ENCODE measurements at regions of chr2 and their contacts with region 1.

Region 1: GRCh38 chr2:30287857-30288513 is 56.7 kb downstream of the LBH start:
- DNase-seq: peak; percentile 55
- ATAC-seq: peak; percentile 89
- H3K4me3 ChIP-seq: peak overlapping the region; percentile 40; the same call in 1 of the 2 replicates
- H3K27ac ChIP-seq: peak overlapping the region; percentile 85
- H3K4me1 ChIP-seq: peaks cover 26% of the 10 kb centered on the region
- H3K27me3 ChIP-seq: no peaks in the 10 kb centered on the region
- CTCF ChIP-seq: no peak
- EP300 ChIP-seq: peak; percentile 21 to 43; a peak in 1 of 4 replicates
- POLR2A ChIP-seq: no peak
- RAD21 ChIP-seq: no peak

Region 2: DNA sequence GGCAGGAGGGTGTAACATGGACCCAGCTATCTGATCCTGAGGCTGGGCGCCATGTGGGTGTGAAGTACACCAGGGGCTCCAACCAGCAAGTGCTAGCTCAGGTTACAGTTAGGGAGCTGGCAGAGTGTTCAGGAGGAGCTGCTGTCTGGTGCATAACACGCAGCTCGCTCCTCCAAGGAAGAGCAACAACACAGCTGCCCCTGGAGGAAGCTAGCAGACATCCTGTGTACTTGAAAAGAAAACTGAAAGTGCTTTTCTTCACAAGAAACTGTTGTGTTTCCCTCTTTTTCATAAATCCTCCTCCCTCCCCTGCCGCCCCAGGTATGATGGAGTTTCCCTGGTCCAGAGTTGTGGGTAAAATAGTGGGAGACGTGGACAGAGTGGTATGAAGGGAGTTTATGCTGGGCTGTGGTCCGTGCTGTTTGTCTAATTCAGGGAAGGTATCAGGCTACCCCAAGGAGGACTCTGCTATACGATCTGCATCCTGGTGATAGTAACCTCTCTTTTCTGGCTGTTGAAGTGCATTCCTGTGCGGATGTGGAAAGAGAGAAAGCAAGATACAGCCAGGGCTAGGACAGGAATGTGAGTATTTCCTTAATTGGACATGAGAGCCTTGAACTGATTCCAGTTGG is 62.7 kb before region 1 on chr2:
- CTCF ChIA-PET with region 1: interaction called, 13 read pairs
- POLR2A ChIA-PET with region 1: interaction called, 9 read pairs
- RAD21 ChIA-PET with region 1: interaction called, 37 read pairs
- SMC1A ChIA-PET with region 1: interaction called, 46 read pairs
- in situ Hi-C with region 1: no loop called
- intact Hi-C with region 1: no loop called
- DNase-seq: no peak
- ATAC-seq: peak; percentile 72
- H3K4me3 ChIP-seq: peak overlapping the region; percentile 56
- H3K27ac ChIP-seq: peak overlapping the region; percentile 95
- H3K4me1 ChIP-seq: peaks cover 45% of the 10 kb centered on the region
- H3K27me3 ChIP-seq: no peaks in the 10 kb centered on the region
- CTCF ChIP-seq: 0 out of 6 replicates have a peak, but pooled peaks of 1 of the 3 experiments have one; percentile 7
- EP300 ChIP-seq: no peak
- POLR2A ChIP-seq: peak; percentile 60
- RAD21 ChIP-seq: no peak

Region 3: DNA sequence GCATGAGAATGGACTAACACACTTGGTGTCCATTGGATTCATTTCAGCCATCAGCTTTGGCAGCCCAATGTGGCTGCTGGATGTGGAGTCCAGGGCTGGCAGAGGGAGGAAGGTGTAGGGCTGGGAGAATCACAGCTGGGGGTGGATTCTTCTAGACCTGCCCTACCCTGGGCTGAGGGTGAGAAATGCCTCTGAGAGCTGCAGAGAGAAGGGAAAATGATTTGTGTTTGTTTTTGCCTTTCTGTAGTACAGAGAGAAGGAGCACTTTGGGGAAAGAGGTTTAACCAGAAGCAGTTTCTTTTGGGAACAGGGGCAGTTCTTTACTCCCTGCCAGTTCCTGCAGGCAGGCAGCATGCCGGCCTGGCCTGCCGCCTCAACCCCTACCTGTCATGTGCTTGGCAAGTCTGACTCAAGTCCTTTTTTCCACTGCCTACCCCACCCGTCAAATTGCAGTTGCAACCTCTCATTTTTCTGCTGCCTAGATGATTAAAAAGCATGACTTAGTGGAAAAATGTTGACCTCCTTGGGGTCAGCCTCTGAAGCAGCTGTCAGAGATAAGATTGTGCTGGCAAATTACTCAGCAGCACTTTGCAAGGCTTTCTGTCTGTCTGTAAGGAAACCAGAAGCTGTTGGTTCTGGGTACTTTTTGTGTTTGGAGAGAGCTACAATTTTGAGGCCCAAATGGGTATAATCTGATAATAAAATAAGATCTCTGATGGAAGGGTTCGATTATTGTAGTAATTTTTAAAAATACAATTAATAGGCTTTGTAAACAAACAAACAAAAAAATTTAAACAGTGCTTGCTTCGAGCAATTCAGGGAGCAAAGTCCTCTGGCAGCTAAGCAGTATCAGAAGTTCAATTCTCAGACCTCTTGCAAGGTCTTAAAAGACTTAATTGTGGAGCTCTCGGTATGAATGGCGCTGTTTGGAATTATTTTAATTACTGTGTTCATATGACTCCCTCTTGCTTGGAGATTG is 35.0 kb before region 1 on chr2:
- CTCF ChIA-PET with region 1: interaction called, 3 read pairs
- POLR2A ChIA-PET with region 1: no interaction called
- RAD21 ChIA-PET with region 1: interaction called, 11 read pairs
- SMC1A ChIA-PET with region 1: interaction called, 24 read pairs
- in situ Hi-C with region 1: no loop called
- intact Hi-C with region 1: no loop called
- DNase-seq: no peak
- ATAC-seq: peak; percentile 64
- H3K4me3 ChIP-seq: no peak overlapping the region
- H3K27ac ChIP-seq: no peak overlapping the region
- H3K4me1 ChIP-seq: no peaks in the 10 kb centered on the region; the same call in 1 of the 2 replicates
- H3K27me3 ChIP-seq: no peaks in the 10 kb centered on the region
- CTCF ChIP-seq: no peak
- EP300 ChIP-seq: no peak
- POLR2A ChIP-seq: no peak
- RAD21 ChIP-seq: no peak

Region 4: GRCh38 chr2:30273261-30273861 is 14.6 kb before region 1 on chr2:
- CTCF ChIA-PET with region 1: interaction called, 9 read pairs
- POLR2A ChIA-PET with region 1: interaction called, 19 read pairs
- RAD21 ChIA-PET with region 1: interaction called, 50 read pairs
- SMC1A ChIA-PET with region 1: interaction called, 24 read pairs
- in situ Hi-C with region 1: no loop called
- intact Hi-C with region 1: no loop called
- DNase-seq: no peak
- ATAC-seq: no peak
- H3K4me3 ChIP-seq: no peak overlapping the region
- H3K27ac ChIP-seq: no peak overlapping the region
- H3K4me1 ChIP-seq: no peaks in the 10 kb centered on the region; the same call in 1 of the 2 replicates
- H3K27me3 ChIP-seq: no peaks in the 10 kb centered on the region
- CTCF ChIP-seq: no peak
- EP300 ChIP-seq: no peak
- POLR2A ChIP-seq: no peak
- RAD21 ChIP-seq: no peak

Region 5: DNA sequence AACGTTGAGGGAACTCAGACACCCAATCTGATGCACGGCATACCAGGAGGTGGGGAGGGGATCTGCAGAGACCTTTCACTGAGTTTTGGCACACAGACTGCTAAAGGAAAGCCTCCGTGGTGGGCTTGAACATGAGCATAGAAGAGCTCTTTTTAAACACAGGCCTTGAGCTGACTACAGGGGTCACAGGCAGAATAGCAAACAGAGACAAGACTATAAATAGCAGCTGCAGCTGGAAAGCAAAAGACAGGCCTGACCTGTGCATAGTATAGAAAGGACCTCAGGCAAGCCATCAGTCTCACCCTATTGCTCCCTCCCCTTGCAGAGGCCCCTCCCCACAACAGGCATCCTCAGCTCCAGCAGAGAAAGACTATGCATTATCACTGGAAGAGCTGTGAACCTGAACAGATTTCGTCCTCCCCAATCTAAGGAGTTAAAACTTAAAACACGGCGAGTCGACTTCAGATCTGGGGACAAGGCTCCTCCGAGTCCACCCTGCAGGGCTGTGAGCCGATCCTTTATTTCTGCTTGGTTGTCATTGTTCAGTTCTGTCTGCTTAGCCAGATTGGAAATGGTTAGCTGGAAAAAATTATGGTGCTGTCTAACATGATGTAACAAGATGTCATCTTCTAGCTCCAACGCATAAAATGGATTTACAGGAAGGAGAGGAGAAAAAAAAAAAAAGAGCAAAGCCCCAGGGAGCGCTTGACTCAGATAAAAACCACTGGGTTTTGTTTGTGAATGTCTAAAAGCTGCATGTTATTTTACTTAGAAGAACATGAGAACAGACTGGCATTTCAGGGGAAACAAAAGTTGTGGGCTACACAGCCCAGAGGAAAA is 133.8 kb after region 1 on chr2:
- CTCF ChIA-PET with region 1: interaction called, 3 read pairs
- POLR2A ChIA-PET with region 1: interaction called, 3 read pairs
- RAD21 ChIA-PET with region 1: interaction called, 21 read pairs
- SMC1A ChIA-PET with region 1: interaction called, 7 read pairs
- in situ Hi-C with region 1: no loop called
- intact Hi-C with region 1: no loop called
- DNase-seq: peak; percentile 28
- ATAC-seq: peak; percentile 77
- H3K4me3 ChIP-seq: 0 out of 2 replicates have a peak overlapping the region, but pooled peaks have one; percentile 17
- H3K27ac ChIP-seq: peak overlapping the region; percentile 6; the same call in 1 of the 2 replicates
- H3K4me1 ChIP-seq: peaks cover 25% of the 10 kb centered on the region
- H3K27me3 ChIP-seq: no peaks in the 10 kb centered on the region
- CTCF ChIP-seq: no peak
- EP300 ChIP-seq: no peak
- POLR2A ChIP-seq: no peak
- RAD21 ChIP-seq: no peak

Region 6: GRCh38 chr2:31233741-31234682 is 946.0 kb after region 1 on chr2 and contains the start of gene EHD3:
- CTCF ChIA-PET with region 1: no interaction called
- POLR2A ChIA-PET with region 1: no interaction called
- RAD21 ChIA-PET with region 1: no interaction called
- SMC1A ChIA-PET with region 1: no interaction called
- in situ Hi-C with region 1: no loop called
- intact Hi-C with region 1: no loop called
- DNase-seq: no peak
- ATAC-seq: peak; percentile 99
- H3K4me3 ChIP-seq: peak within 1 kb of the TSS; percentile 48
- H3K27ac ChIP-seq: no peak within 1 kb of the TSS
- H3K4me1 ChIP-seq: no peaks in the 10 kb centered on the region; the same call in 1 of the 2 replicates
- H3K27me3 ChIP-seq: no peaks in the 10 kb centered on the region
- CTCF ChIP-seq: peak; percentile 32 to 61 (median 59); a peak in 5 of 6 replicates
- EP300 ChIP-seq: no peak
- POLR2A ChIP-seq: peak; percentile 54; the same call in 1 of the 2 replicates
- RAD21 ChIP-seq: peak; percentile 48; the same call in 1 of the 2 replicates
- polyA plus RNA-seq, gene EHD3: 1.1 to 1.5 TPM